Cardiac septum (tissue), 1 donor: ENCODE measurements at regions of chr14 and their contacts with region 1.

Region 1: GRCh38 chr14:74712499-74713394 is at the starts of genes AREL1 and FCF1:
- DNase-seq: peak; percentile 92
- total RNA-seq, gene AREL1: 21.2 TPM
- total RNA-seq, gene FCF1: 36.6 TPM

Region 2: DNA sequence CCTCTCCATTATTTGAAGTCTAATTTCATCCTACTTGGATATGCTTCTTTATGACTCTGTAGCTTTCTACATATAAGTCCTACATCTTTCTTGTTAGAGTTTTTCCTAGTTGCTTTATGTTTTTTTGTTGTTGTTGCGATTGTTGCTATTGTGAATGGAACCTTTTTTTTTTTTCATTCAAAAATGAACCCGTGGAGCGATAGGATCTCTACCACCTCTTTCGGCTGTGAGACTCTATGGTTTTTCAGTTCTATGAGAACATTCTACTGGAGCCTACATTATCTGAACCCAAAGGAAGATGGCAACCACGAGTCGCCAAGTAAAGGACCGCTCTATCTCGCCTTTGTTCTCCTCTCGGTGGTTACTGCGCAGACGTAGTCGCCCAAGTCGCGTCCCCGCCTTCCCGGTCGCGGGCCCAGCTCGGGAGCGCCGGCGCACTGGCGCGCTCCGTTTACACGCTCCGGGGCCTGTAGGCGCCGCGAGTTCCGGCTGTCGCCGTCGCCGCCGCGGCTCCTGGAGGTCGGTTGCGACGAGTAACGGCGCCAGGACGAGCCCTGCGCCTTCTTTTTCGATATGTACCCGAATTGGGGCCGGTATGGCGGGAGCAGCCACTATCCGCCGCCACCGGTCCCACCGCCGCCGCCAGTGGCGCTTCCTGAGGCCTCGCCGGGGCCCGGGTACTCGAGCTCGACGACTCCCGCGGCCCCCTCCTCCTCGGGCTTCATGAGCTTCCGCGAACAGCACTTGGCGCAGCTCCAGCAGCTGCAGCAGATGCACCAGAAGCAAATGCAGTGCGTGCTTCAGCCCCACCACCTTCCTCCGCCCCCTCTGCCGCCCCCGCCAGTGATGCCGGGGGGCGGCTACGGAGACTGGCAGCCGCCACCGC is 50.4 kb after region 1 on chr14 and contains the start of gene YLPM1:
- intact Hi-C with region 1: loop called (anchors 2 kb)
- DNase-seq: peak; percentile 96
- total RNA-seq, gene YLPM1: 40.8 TPM

Region 3: DNA sequence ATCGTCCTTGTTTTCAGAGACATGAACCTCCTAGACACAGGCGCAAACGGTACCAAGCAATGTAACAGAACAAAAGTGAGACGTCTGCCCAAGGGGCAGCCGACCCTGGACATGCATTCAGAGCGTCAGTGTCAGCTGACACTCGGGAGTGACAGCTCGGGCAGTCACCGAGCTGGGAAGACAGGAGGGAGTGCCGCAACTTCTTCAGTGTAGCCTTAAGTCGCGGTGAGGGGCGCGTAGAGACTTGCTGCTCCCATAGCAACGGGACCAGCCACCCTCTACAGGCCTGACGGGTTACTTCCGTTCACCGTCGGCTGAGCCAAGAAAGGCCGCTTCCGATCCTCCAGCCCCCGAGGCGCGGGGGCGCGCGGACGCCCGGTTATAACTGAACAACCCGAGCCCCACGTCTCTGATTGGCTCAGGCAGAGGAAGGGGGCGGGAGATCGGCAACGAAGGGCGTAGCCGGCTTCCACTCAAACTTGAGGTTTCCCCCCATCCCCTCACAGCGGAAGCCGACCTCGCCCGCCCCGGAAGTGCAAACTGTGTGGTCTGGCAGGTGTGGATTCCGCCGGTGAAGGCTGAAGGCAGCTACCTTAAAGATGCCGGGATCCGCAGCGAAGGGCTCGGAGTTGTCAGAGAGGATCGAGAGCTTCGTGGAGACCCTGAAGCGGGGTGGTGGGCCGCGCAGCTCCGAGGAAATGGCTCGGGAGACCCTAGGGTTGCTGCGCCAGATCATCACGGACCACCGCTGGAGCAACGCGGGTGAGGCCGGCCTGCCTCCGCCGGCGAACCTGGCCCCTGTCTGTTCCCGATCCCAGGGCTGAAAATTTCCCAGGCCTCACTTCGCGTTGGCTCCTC is 289.9 kb after region 1 on chr14 and contains the start of gene EIF2B2:
- intact Hi-C with region 1: no loop called
- DNase-seq: peak; percentile 97
- total RNA-seq, gene EIF2B2: 36.4 TPM